ENCODE measurements at regions of chr21 and their contacts with region 1.

Region 1: GRCh38 chr21:33266050-33266788 is at the start of gene IL10RB:
- DNase-seq: peak; percentile 61 to 77 (median 68)
- H3K4me3 ChIP-seq: peak within 1 kb of the TSS; percentile 54 to 79
- H3K4me3 Mint-ChIP-seq: peak within 1 kb of the TSS; percentile 93 to 99 (median 96)
- H3K27ac ChIP-seq: peak within 1 kb of the TSS; percentile 80
- H3K27ac Mint-ChIP-seq: peak within 1 kb of the TSS; percentile 92 to 97 (median 95)
- H3K4me1 ChIP-seq: peaks cover 59% of the 10 kb centered on the region
- H3K4me1 Mint-ChIP-seq: peaks cover 38 to 74% (median 50%) of the 10 kb centered on the region in 4 donors
- H3K27me3 ChIP-seq: no peaks in the 10 kb centered on the region
- H3K27me3 Mint-ChIP-seq: no peaks in the 10 kb centered on the region
- total RNA-seq, gene IL10RB: 30.6 to 36.4 TPM

Region 2: GRCh38 chr21:33132054-33132453 is 134.2 kb before region 1 on chr21:
- CTCF ChIA-PET with region 1: no interaction called
- POLR2A ChIA-PET with region 1: no interaction called
- intact Hi-C with region 1: no loop called
- DNase-seq: peak in 1 of 5 donors; percentile 5
- H3K4me3 ChIP-seq: no peak overlapping the region
- H3K4me3 Mint-ChIP-seq: no peak overlapping the region
- H3K27ac ChIP-seq: no peak overlapping the region
- H3K27ac Mint-ChIP-seq: no peak overlapping the region
- H3K4me1 ChIP-seq: peaks cover 5% of the 10 kb centered on the region
- H3K4me1 Mint-ChIP-seq: peaks cover 3 to 5% (median 4%) of the 10 kb centered on the region in 4 donors
- H3K27me3 ChIP-seq: peaks cover 3% of the 10 kb centered on the region
- H3K27me3 Mint-ChIP-seq: peaks cover 12 to 28% of the 10 kb centered on the region in 2 donors

Region 3: DNA sequence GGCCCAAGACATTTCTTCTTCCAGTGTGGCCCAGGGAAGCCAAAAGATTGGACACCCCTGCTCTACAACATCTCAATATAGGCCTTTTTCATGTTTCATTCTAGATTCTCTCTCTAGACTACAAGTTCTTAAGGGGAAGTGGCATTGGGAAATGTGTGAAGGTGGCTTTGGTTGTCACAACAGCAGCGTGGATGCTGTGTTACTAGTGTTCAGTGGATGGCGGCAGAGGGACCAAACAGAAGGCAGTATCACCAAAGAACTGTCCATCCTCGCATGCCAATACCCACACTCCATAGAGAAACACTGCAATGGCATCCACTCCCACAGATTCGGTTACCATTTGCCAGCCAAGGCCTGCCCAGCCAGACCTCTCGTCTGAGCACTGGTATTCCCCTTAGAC is 60.7 kb before region 1 on chr21:
- CTCF ChIA-PET with region 1: interaction called, 7 read pairs
- POLR2A ChIA-PET with region 1: interaction called, 11 read pairs
- intact Hi-C with region 1: no loop called
- DNase-seq: peak in 3 of 5 donors; percentile 20 to 35 (median 23)
- H3K4me3 ChIP-seq: no peak overlapping the region
- H3K4me3 Mint-ChIP-seq: peak overlapping the region; percentile 58 to 92 (median 73)
- H3K27ac ChIP-seq: no peak overlapping the region
- H3K27ac Mint-ChIP-seq: peak overlapping the region; percentile 71 to 97 (median 86)
- H3K4me1 ChIP-seq: peaks cover 38% of the 10 kb centered on the region
- H3K4me1 Mint-ChIP-seq: peaks cover 34 to 67% (median 47%) of the 10 kb centered on the region in 4 donors
- H3K27me3 ChIP-seq: no peaks in the 10 kb centered on the region
- H3K27me3 Mint-ChIP-seq: no peaks in the 10 kb centered on the region

Region 4: DNA sequence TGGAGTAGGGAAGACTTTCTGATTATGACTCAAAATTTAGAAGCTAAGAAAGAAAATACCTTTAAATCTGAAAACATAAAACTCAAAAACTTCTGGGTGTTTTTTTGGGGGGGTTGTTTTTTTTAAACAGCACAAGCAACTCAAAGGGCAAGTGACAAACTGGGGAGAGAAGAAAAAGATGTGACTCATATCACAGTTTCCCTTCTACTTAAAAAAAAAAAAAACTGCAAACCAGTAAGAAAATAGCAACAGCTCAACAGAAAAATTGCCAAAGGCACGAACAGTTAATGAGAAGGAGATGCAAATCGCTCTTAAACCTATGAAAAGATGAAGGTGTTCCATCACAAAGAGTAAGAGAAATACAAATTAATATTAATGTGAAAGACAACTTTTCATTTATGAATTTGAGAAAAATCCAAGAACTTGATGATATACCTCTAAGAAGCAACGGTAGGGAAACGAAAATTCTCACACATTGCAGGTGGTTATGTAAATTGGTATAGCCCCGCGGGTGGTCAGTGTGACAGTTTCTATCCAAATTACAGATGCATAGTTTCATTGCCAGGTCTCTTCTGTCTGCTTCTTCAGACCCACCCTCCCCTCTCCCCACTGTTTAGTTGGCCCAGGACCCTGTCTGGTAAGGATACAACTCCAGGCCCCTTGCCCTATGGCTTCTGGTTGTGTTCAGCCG is 27.5 kb before region 1 on chr21:
- CTCF ChIA-PET with region 1: interaction called, 5 read pairs
- POLR2A ChIA-PET with region 1: interaction called, 12 read pairs
- intact Hi-C with region 1: no loop called
- DNase-seq: peak in 4 of 5 donors; percentile 22 to 43 (median 24)
- H3K4me3 ChIP-seq: peak overlapping the region in 1 of 2 donors; percentile 40
- H3K4me3 Mint-ChIP-seq: peak overlapping the region; percentile 64 to 79 (median 70)
- H3K27ac ChIP-seq: peak overlapping the region; percentile 60
- H3K27ac Mint-ChIP-seq: peak overlapping the region; percentile 65 to 94 (median 88)
- H3K4me1 ChIP-seq: peaks cover 93% of the 10 kb centered on the region
- H3K4me1 Mint-ChIP-seq: peaks cover 66 to 92% (median 78%) of the 10 kb centered on the region in 4 donors
- H3K27me3 ChIP-seq: no peaks in the 10 kb centered on the region
- H3K27me3 Mint-ChIP-seq: no peaks in the 10 kb centered on the region

Region 5: GRCh38 chr21:33249331-33250002 is 16.8 kb before region 1 on chr21:
- CTCF ChIA-PET with region 1: no interaction called
- POLR2A ChIA-PET with region 1: interaction called, 18 read pairs
- intact Hi-C with region 1: loop called (anchors 2 kb)
- DNase-seq: no peak
- H3K4me3 ChIP-seq: no peak overlapping the region
- H3K4me3 Mint-ChIP-seq: peak overlapping the region in 5 of 8 donors; percentile 8 to 28 (median 20)
- H3K27ac ChIP-seq: no peak overlapping the region
- H3K27ac Mint-ChIP-seq: peak overlapping the region; percentile 62 to 94 (median 89)
- H3K4me1 ChIP-seq: peaks cover 52% of the 10 kb centered on the region
- H3K4me1 Mint-ChIP-seq: peaks cover 38 to 72% (median 63%) of the 10 kb centered on the region in 4 donors
- H3K27me3 ChIP-seq: no peaks in the 10 kb centered on the region
- H3K27me3 Mint-ChIP-seq: no peaks in the 10 kb centered on the region

Region 6: DNA sequence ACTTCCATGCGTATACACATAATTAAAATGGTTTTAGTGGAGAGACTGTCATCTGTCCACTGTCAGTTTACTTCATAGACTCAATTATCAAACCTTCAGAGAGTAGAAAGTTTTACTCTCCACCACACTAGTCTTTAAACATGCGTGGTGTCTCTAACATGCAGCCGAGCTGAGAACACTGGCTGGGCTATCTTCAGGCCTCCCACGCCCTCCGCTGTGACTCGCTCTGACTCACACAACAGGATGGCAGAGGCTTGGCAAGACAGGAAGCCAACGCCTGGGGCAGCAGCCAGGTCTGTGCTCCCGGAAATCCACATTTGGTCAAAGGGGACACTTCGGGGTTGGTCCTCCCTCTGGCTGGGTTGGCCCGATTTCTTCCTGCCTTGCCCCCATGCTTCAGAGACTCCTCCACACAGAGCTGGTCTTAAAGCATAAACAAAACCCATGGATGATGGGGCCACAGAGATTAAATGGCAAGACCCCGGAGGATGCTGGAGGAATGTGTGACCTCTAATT is 114.3 kb after region 1 on chr21:
- CTCF ChIA-PET with region 1: no interaction called
- POLR2A ChIA-PET with region 1: interaction called, 15 read pairs
- intact Hi-C with region 1: no loop called
- DNase-seq: peak; percentile 68 to 93 (median 72)
- H3K4me3 ChIP-seq: no peak overlapping the region
- H3K4me3 Mint-ChIP-seq: peak overlapping the region in 7 of 8 donors; percentile 44 to 81 (median 66)
- H3K27ac ChIP-seq: peak overlapping the region; percentile 44
- H3K27ac Mint-ChIP-seq: peak overlapping the region; percentile 87 to 96 (median 91)
- H3K4me1 ChIP-seq: peaks cover 64% of the 10 kb centered on the region
- H3K4me1 Mint-ChIP-seq: peaks cover 45 to 74% (median 58%) of the 10 kb centered on the region in 4 donors
- H3K27me3 ChIP-seq: no peaks in the 10 kb centered on the region
- H3K27me3 Mint-ChIP-seq: no peaks in the 10 kb centered on the region

Measured in CD4-positive, alpha-beta memory T cell (primary cell).